Natural killer cell (primary cell): ENCODE measurements at regions of chr15 and their contacts with region 1.

Region 1: DNA sequence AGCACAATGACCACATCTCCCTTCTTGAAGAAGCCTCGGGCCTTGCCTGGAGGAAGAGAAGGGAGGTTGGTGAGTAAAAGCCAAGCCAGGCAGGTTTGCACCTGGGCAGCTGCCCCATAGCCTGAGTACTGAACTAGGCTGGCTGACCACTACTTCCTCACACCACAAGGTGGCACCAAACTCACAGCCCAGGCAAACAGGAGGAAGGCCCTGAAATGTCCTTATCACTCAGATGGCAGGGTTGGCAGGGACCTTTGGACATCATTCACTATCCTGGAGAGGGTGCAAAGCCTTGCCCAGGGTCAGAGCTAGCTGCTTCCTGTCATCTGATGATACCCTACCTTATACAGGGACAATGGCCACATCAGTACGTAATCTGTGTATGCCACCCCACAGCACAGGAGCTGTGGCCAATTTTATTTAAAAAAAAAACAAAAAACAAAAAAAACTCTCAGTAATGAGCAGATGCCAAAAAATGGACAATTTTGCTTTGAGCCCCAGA is 2.2 kb upstream of the GRAMD2A start:
- DNase-seq: peak; percentile 67 to 88
- ATAC-seq: peak; percentile 82 to 94 (median 84)
- H3K4me3 ChIP-seq: no peak overlapping the region
- H3K4me3 Mint-ChIP-seq: no peak overlapping the region
- H3K27ac ChIP-seq: no peak overlapping the region
- H3K27ac Mint-ChIP-seq: no peak overlapping the region
- H3K4me1 ChIP-seq: peaks cover 6% of the 10 kb centered on the region
- H3K4me1 Mint-ChIP-seq: peaks cover 5% of the 10 kb centered on the region in 2 donors
- H3K27me3 ChIP-seq: peaks cover 2% of the 10 kb centered on the region
- H3K27me3 Mint-ChIP-seq: peaks cover 13 to 16% of the 10 kb centered on the region in 2 donors
- CTCF ChIP-seq: peak; percentile 84

Region 2: GRCh38 chr15:71997691-71998090 is 202.1 kb before region 1 on chr15:
- intact Hi-C with region 1: no loop called
- DNase-seq: no peak
- ATAC-seq: no peak
- H3K4me3 ChIP-seq: no peak overlapping the region
- H3K4me3 Mint-ChIP-seq: no peak overlapping the region
- H3K27ac ChIP-seq: no peak overlapping the region
- H3K27ac Mint-ChIP-seq: no peak overlapping the region
- H3K4me1 ChIP-seq: no peaks in the 10 kb centered on the region
- H3K4me1 Mint-ChIP-seq: no peaks in the 10 kb centered on the region
- H3K27me3 ChIP-seq: no peaks in the 10 kb centered on the region
- H3K27me3 Mint-ChIP-seq: no peaks in the 10 kb centered on the region
- CTCF ChIP-seq: no peak

Region 3: GRCh38 chr15:72220678-72221077 is 20.9 kb after region 1 on chr15:
- intact Hi-C with region 1: no loop called
- DNase-seq: no peak
- ATAC-seq: no peak
- H3K4me3 ChIP-seq: no peak overlapping the region
- H3K4me3 Mint-ChIP-seq: no peak overlapping the region
- H3K27ac ChIP-seq: no peak overlapping the region
- H3K27ac Mint-ChIP-seq: peak overlapping the region in 1 of 2 donors; percentile 16
- H3K4me1 ChIP-seq: peaks cover 4% of the 10 kb centered on the region
- H3K4me1 Mint-ChIP-seq: peaks cover 19 to 30% of the 10 kb centered on the region in 2 donors
- H3K27me3 ChIP-seq: no peaks in the 10 kb centered on the region
- H3K27me3 Mint-ChIP-seq: no peaks in the 10 kb centered on the region
- CTCF ChIP-seq: no peak

Region 4: GRCh38 chr15:72231066-72231846 is 31.5 kb after region 1 on chr15 and contains the start of gene PKM:
- intact Hi-C with region 1: loop called (anchors 1 kb)
- DNase-seq: peak; percentile 77 to 95
- ATAC-seq: peak; percentile 24 to 61 (median 58)
- H3K4me3 ChIP-seq: peak within 1 kb of the TSS; percentile 92
- H3K4me3 Mint-ChIP-seq: peak within 1 kb of the TSS; percentile 98
- H3K27ac ChIP-seq: peak within 1 kb of the TSS; percentile 80
- H3K27ac Mint-ChIP-seq: peak within 1 kb of the TSS; percentile 81 to 94
- H3K4me1 ChIP-seq: peaks cover 46% of the 10 kb centered on the region
- H3K4me1 Mint-ChIP-seq: peaks cover 39 to 52% of the 10 kb centered on the region in 2 donors
- H3K27me3 ChIP-seq: no peaks in the 10 kb centered on the region
- H3K27me3 Mint-ChIP-seq: no peaks in the 10 kb centered on the region
- CTCF ChIP-seq: no peak
- total RNA-seq, gene PKM: 121 to 180 (median 155) TPM

Region 5: DNA sequence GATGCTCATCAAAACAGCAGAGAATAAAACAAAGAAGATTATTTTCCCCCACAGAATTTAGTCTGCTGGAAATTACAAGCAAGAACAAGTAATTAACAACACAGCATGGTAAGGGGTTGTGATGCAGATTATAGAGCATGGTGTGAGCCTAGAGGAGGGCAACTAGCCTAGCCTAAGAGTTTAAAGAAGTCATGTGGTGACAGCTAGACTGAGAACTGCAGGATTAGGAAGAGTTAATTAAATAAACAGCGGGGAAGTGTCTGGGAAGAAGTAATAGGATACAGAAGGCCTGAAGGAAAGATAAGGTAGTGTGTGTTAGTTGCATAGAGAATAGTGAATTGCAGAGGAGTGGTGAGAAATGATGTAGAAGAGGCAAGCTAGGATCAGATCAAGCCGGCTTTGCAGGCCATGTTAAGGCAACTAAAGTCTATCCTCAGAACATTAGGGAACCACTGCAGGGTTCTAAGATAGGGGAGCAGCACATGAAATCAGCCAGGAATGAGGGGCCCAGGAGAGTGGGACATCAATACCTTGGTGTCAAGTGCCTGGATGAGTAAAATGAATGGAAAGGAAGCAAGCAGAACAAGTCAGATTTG is 43.1 kb after region 1 on chr15:
- intact Hi-C with region 1: no loop called
- DNase-seq: no peak
- ATAC-seq: no peak
- H3K4me3 ChIP-seq: no peak overlapping the region
- H3K4me3 Mint-ChIP-seq: no peak overlapping the region
- H3K27ac ChIP-seq: no peak overlapping the region
- H3K27ac Mint-ChIP-seq: no peak overlapping the region
- H3K4me1 ChIP-seq: no peaks in the 10 kb centered on the region
- H3K4me1 Mint-ChIP-seq: peaks cover 0 to under 1% of the 10 kb centered on the region in 2 donors
- H3K27me3 ChIP-seq: no peaks in the 10 kb centered on the region
- H3K27me3 Mint-ChIP-seq: no peaks in the 10 kb centered on the region
- CTCF ChIP-seq: no peak

Region 6: DNA sequence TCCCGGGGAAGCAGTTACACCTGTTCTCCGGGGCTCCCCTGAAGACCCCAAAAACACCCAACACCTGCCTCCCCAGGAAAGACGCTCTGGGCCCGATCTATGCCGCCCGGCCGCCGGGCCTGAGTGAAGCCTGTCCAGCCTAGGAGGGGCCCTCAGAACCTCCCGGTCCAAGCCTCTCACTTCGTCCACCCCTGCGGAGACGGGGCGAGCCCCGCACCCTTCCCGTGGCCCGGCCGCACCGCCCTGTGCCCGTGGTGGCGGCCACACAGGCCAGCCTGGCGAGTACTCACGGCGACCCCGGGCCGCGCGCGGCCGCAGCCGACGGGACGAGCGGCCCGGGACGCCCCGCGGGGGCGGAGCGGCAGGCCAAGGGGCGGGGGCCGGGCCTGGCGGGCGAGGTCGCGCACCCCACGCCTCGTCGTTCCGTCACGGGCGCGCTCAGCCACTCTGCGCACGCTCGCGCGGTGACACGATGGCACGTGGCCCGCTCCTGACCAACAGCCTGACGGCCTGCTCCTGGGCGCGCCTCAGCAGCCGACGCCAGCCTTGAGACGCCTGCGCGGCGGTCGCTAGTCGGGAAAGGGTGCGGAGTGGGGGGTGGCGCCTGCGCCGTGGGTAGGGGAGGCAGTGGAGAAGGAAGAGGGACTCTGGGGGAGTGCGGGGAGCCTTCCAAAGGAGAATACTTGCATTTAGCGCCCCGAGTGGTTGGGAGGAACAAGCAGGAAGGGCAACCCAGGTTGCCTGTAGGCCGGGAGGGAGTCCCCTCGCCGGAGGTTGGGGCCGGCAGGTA is 72.6 kb after region 1 on chr15 and contains the start of gene PARP6:
- intact Hi-C with region 1: loop called (anchors 5 kb)
- DNase-seq: peak; percentile 95 to 99
- ATAC-seq: peak; percentile 94 to 98 (median 96)
- H3K4me3 ChIP-seq: peak within 1 kb of the TSS; percentile 82
- H3K4me3 Mint-ChIP-seq: peak within 1 kb of the TSS; percentile 91
- H3K27ac ChIP-seq: peak within 1 kb of the TSS; percentile 87
- H3K27ac Mint-ChIP-seq: peak within 1 kb of the TSS; percentile 90 to 93
- H3K4me1 ChIP-seq: peaks cover 15% of the 10 kb centered on the region
- H3K4me1 Mint-ChIP-seq: peaks cover 42% of the 10 kb centered on the region in 2 donors
- H3K27me3 ChIP-seq: no peaks in the 10 kb centered on the region
- H3K27me3 Mint-ChIP-seq: peaks cover 0 to 2% of the 10 kb centered on the region in 2 donors
- CTCF ChIP-seq: peak; percentile 30
- total RNA-seq, gene PARP6: 132 to 135 (median 132) TPM

Region 7: GRCh38 chr15:72285927-72286516 is 86.3 kb after region 1 on chr15:
- intact Hi-C with region 1: loop called (anchors 2 kb)
- DNase-seq: peak in 1 of 2 donors; percentile 71
- ATAC-seq: peak in 1 of 3 donors; percentile 45
- H3K4me3 ChIP-seq: no peak overlapping the region
- H3K4me3 Mint-ChIP-seq: no peak overlapping the region
- H3K27ac ChIP-seq: no peak overlapping the region
- H3K27ac Mint-ChIP-seq: peak overlapping the region in 1 of 2 donors; percentile 25
- H3K4me1 ChIP-seq: no peaks in the 10 kb centered on the region
- H3K4me1 Mint-ChIP-seq: no peaks in the 10 kb centered on the region
- H3K27me3 ChIP-seq: no peaks in the 10 kb centered on the region
- H3K27me3 Mint-ChIP-seq: no peaks in the 10 kb centered on the region
- CTCF ChIP-seq: no peak

Region 8: GRCh38 chr15:72671535-72671934 is 471.8 kb after region 1 on chr15:
- intact Hi-C with region 1: loop called (anchors 10 kb)
- DNase-seq: no peak
- ATAC-seq: no peak
- H3K4me3 ChIP-seq: no peak overlapping the region
- H3K4me3 Mint-ChIP-seq: no peak overlapping the region
- H3K27ac ChIP-seq: no peak overlapping the region
- H3K27ac Mint-ChIP-seq: no peak overlapping the region
- H3K4me1 ChIP-seq: peaks cover 6% of the 10 kb centered on the region
- H3K4me1 Mint-ChIP-seq: peaks cover 6 to 7% of the 10 kb centered on the region in 2 donors
- H3K27me3 ChIP-seq: peaks cover 2% of the 10 kb centered on the region
- H3K27me3 Mint-ChIP-seq: peaks cover 10 to 16% of the 10 kb centered on the region in 2 donors
- CTCF ChIP-seq: no peak